GM13977 (cell line): ENCODE measurements at regions of chr10 and their contacts with region 1.

Region 1: GRCh38 chr10:98467506-98468346 is 21.0 kb upstream of the HPS1 start:
- DNase-seq: peak; percentile 90
- CTCF ChIP-seq: peak; percentile 91

Region 2: GRCh38 chr10:98589007-98589406 is 121.3 kb after region 1 on chr10:
- in situ Hi-C with region 1: no loop called
- DNase-seq: no peak
- CTCF ChIP-seq: no peak

Region 3: GRCh38 chr10:98664331-98665042 is 196.8 kb after region 1 on chr10:
- in situ Hi-C with region 1: loop called (anchors 10 kb)
- DNase-seq: peak; percentile 43
- CTCF ChIP-seq: peak; percentile 63

Region 4: DNA sequence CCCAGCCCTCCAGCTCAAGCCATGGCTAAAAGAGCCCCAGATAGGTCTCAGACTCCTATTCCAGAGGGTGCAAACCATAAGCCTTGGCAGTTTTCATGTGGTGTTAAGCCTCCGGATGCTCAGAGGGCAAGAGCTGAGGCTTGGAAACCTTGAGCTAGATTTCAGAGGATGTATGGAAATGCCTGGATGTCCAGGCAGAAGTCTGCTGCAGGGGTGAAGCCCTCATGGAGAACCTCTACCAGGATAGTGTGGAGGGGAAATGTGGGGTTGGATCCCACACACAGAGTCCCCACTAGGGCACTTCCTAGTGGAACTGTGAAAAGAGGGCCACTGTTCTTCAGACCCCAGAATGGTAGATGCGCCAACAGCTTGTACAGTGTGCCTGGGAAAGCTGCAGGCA is 781.1 kb after region 1 on chr10:
- in situ Hi-C with region 1: loop called (anchors 10 kb)
- DNase-seq: no peak
- CTCF ChIP-seq: no peak